ENCODE measurements at regions of chr11 and their contacts with region 1.

Region 1: GRCh38 chr11:72793425-72794367 is at the start of gene STARD10:
- DNase-seq: peak; percentile 98
- CTCF ChIP-seq: peak; percentile 84

Region 2: GRCh38 chr11:72716290-72716689 is 77.4 kb before region 1 on chr11:
- CTCF ChIA-PET with region 1: interaction called, 12 read pairs
- POLR2A ChIA-PET with region 1: no interaction called
- DNase-seq: no peak
- CTCF ChIP-seq: no peak

Region 3: GRCh38 chr11:72736452-72737069 is 57.1 kb before region 1 on chr11:
- CTCF ChIA-PET with region 1: interaction called, 36 read pairs
- POLR2A ChIA-PET with region 1: no interaction called
- DNase-seq: peak; percentile 50
- CTCF ChIP-seq: no peak

Region 4: GRCh38 chr11:72781313-72782050 is 12.2 kb before region 1 on chr11:
- CTCF ChIA-PET with region 1: interaction called, 88 read pairs
- POLR2A ChIA-PET with region 1: interaction called, 3 read pairs
- DNase-seq: peak; percentile 83
- CTCF ChIP-seq: no peak

Region 5: DNA sequence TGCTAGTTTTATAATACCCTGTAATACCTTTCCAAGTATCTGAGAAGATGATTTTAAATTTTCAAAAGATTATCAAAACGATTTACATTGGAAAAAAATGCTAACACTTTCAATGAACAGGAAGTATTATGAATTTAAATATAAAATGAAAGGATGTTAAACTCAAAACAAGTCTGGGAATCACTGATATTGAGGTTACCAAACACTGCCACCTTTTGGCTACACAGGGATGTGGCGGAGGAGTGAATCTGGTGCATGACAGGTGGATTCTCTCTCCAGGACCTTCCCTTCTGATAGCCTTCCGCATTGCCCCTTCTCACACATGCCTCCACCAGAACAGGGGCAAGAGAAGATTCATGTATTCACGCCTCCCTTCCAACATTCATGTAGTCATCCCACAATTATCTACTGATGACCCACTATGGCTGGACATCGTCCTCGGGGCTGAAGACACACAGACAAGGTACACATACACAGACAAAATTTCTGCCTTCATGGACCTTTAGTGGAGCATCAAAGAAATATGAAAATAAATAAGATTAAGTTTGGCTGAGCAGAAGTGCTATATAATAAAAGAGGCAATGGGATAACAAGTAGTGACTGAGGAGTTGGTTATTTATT is 55.3 kb after region 1 on chr11:
- CTCF ChIA-PET with region 1: no interaction called
- POLR2A ChIA-PET with region 1: interaction called, 11 read pairs
- DNase-seq: no peak
- CTCF ChIP-seq: peak; percentile 32